Caco-2 (cell line): ENCODE measurements at regions of chr2 and their contacts with region 1.

Region 1: DNA sequence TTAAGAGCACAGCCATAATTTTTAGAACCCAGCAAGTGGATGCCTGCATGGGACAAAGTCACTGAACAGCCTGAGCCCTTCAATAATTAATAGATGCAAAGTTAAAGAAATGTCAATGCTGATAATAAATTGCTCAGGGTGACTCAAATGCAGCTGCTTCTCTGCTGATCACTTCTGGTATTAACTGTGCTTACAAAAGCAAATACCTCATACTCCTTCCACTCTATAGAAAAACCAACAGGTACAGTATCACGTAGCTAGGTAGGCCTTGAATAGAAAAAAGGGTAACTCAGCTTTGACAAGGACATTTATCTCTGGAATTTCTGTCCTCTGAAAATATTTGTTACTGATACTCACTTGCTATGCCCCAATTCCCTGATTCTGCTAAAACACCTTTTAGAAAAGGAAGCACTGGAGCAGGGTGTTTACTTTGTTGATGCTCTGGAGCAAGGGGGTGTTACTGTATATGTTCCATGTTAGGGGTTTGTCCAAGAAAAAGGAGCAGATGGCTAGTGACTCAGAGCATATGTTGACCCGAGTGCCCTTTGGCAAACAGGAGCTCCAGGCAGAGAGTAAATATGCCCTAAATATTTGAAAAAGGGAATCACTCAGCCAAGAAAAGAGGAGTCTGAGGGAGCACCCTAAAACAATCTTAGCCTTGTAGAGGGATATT is 59.1 kb upstream of the RTN4 start:
- DNase-seq: peak; percentile 79 to 83
- H3K4me3 ChIP-seq: no peak overlapping the region
- H3K4me3 Mint-ChIP-seq: peak overlapping the region; percentile 65
- H3K27ac Mint-ChIP-seq: peak overlapping the region; percentile 99
- H3K4me1 ChIP-seq: peaks cover 64% of the 10 kb centered on the region
- H3K4me1 Mint-ChIP-seq: peaks cover 43% of the 10 kb centered on the region
- H3K27me3 ChIP-seq: no peaks in the 10 kb centered on the region
- H3K27me3 Mint-ChIP-seq: no peaks in the 10 kb centered on the region
- CTCF ChIP-seq: no peak

Region 2: DNA sequence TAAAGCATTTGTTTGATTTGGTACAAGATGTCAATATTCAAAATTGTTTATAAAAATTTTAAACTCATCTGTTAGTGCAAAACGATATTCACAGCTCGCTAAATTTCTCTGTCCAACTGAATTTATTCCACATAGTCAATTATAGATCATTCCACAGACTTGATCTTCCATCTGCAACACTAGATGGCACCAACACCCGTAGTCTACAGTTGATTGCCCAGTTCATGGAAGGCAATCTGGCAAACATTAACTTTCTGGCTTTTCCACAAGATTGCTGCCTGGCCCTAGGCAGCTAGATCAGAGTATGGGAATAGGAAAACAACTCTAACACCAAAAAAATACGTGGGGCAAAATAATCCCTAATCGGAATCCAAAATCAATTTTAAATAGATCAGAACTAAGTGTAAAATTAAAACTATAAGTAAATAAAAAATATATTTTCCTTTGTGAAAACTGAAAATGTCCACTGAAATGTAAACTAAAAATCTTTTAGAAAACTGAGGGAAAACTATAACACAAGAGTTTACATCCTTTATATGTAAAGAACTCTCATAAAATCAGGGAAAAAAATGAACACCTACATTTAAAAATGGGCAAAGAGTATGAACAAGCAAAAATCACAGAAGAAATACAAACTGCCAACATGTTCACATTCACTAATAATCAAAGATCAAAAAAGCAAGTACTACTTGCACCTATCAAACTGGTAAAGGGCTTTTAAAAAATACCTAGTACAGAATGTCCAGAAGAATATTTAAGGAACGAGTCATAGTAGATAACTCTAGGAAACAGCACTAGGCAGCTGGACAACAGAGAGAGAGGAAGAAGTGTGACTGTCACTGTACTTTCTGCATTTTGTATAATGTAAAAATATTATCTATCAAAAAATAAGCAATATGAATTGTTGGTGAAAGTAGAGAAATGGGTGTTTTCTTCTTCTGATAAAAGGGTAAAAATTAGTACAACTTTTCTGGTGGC is 94.1 kb before region 1 on chr2:
- CTCF ChIA-PET with region 1: interaction called, 5 read pairs
- POLR2A ChIA-PET with region 1: no interaction called
- intact Hi-C with region 1: loop called (anchors 2 kb)
- DNase-seq: peak; percentile 77 to 81
- H3K4me3 ChIP-seq: no peak overlapping the region
- H3K4me3 Mint-ChIP-seq: peak overlapping the region; percentile 55
- H3K27ac Mint-ChIP-seq: peak overlapping the region; percentile 55
- H3K4me1 ChIP-seq: peaks cover 55% of the 10 kb centered on the region
- H3K4me1 Mint-ChIP-seq: peaks cover 37% of the 10 kb centered on the region
- H3K27me3 ChIP-seq: no peaks in the 10 kb centered on the region
- H3K27me3 Mint-ChIP-seq: no peaks in the 10 kb centered on the region
- CTCF ChIP-seq: peak; percentile 64 to 75

Region 3: DNA sequence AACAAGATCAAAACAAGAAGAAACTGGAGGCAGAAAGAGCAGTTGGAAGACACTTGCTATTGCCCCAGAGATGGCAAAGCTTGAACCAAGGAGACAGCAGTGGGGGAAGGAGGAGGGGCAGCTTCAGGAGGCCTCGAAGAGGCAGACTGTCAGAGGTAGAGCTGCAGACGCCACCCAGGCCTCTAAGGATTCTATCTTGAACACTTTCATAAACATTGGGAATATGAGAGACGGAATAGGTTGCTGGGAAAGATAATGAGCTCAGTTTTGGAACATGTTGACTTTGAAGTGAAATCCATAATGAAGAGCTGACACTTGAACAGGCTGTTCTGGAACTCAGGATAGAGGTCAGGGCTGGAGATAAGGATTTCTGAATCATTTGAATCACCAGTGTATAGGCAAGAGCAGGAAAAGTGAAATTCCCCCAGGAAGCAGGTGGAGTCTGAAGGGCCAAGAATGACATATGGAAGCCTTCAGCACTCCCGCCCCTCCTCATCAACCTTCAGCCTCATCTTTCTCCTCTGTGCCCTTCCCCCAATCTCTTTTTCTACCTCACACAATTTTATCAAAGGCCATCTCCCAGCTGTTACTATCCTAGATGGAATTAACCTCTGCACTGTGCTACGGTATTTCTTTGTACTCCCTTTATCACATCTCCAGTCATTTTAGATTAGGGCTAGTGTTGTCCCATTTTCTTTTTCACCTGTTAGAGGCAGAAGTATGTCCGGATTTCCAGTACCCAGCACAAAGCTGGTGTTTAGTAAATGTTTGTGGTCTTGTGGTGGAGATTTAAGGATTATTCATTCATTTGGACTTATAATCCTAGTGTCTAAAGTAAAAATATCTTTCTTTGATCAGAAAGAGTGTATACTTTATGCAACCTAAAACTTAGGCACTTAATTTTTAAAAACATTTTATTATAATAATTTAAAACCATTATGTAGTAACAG is 11.6 kb before region 1 on chr2:
- CTCF ChIA-PET with region 1: interaction called, 3 read pairs
- POLR2A ChIA-PET with region 1: no interaction called
- intact Hi-C with region 1: loop called (anchors 1 kb)
- DNase-seq: no peak
- H3K4me3 ChIP-seq: no peak overlapping the region
- H3K4me3 Mint-ChIP-seq: no peak overlapping the region
- H3K27ac Mint-ChIP-seq: no peak overlapping the region
- H3K4me1 ChIP-seq: peaks cover 32% of the 10 kb centered on the region
- H3K4me1 Mint-ChIP-seq: no peaks in the 10 kb centered on the region
- H3K27me3 ChIP-seq: no peaks in the 10 kb centered on the region
- H3K27me3 Mint-ChIP-seq: no peaks in the 10 kb centered on the region
- CTCF ChIP-seq: no peak

Region 4: GRCh38 chr2:55120634-55121359 is 11.4 kb after region 1 on chr2:
- CTCF ChIA-PET with region 1: no interaction called
- POLR2A ChIA-PET with region 1: no interaction called
- intact Hi-C with region 1: no loop called
- DNase-seq: no peak
- H3K4me3 ChIP-seq: no peak overlapping the region
- H3K4me3 Mint-ChIP-seq: no peak overlapping the region
- H3K27ac Mint-ChIP-seq: no peak overlapping the region
- H3K4me1 ChIP-seq: peaks cover 8% of the 10 kb centered on the region
- H3K4me1 Mint-ChIP-seq: peaks cover 2% of the 10 kb centered on the region
- H3K27me3 ChIP-seq: no peaks in the 10 kb centered on the region
- H3K27me3 Mint-ChIP-seq: no peaks in the 10 kb centered on the region
- CTCF ChIP-seq: no peak

Region 5: GRCh38 chr2:55136138-55136541 is 26.8 kb after region 1 on chr2:
- CTCF ChIA-PET with region 1: no interaction called
- POLR2A ChIA-PET with region 1: no interaction called
- intact Hi-C with region 1: loop called (anchors 1 kb)
- DNase-seq: peak in 1 of 2 experiments; percentile 56
- H3K4me3 ChIP-seq: no peak overlapping the region
- H3K4me3 Mint-ChIP-seq: no peak overlapping the region
- H3K27ac Mint-ChIP-seq: peak overlapping the region; percentile 60
- H3K4me1 ChIP-seq: peaks cover 45% of the 10 kb centered on the region
- H3K4me1 Mint-ChIP-seq: peaks cover 51% of the 10 kb centered on the region
- H3K27me3 ChIP-seq: no peaks in the 10 kb centered on the region
- H3K27me3 Mint-ChIP-seq: no peaks in the 10 kb centered on the region
- CTCF ChIP-seq: no peak

Region 6: GRCh38 chr2:55153584-55154295 is 44.4 kb after region 1 on chr2:
- CTCF ChIA-PET with region 1: no interaction called
- POLR2A ChIA-PET with region 1: no interaction called
- intact Hi-C with region 1: loop called (anchors 1 kb)
- DNase-seq: no peak
- H3K4me3 ChIP-seq: no peak overlapping the region
- H3K4me3 Mint-ChIP-seq: no peak overlapping the region
- H3K27ac Mint-ChIP-seq: peak overlapping the region; percentile 82
- H3K4me1 ChIP-seq: peaks cover 59% of the 10 kb centered on the region
- H3K4me1 Mint-ChIP-seq: peaks cover 43% of the 10 kb centered on the region
- H3K27me3 ChIP-seq: no peaks in the 10 kb centered on the region
- H3K27me3 Mint-ChIP-seq: no peaks in the 10 kb centered on the region
- CTCF ChIP-seq: no peak